Activated CD8-positive, alpha-beta T cell treated with anti-CD3 and anti-CD28 coated beads for 36 hours (primary cell): ENCODE measurements at regions of chr20 and their contacts with region 1.

Region 1: GRCh38 chr20:16810216-16810615 is 62.1 kb downstream of the OTOR start:
- DNase-seq: no peak
- ATAC-seq: no peak
- H3K4me3 Mint-ChIP-seq: no peak overlapping the region
- H3K27ac Mint-ChIP-seq: no peak overlapping the region
- H3K4me1 Mint-ChIP-seq: no peaks in the 10 kb centered on the region
- H3K27me3 Mint-ChIP-seq: peaks cover 19% of the 10 kb centered on the region
- CTCF ChIP-seq: no peak

Region 2: DNA sequence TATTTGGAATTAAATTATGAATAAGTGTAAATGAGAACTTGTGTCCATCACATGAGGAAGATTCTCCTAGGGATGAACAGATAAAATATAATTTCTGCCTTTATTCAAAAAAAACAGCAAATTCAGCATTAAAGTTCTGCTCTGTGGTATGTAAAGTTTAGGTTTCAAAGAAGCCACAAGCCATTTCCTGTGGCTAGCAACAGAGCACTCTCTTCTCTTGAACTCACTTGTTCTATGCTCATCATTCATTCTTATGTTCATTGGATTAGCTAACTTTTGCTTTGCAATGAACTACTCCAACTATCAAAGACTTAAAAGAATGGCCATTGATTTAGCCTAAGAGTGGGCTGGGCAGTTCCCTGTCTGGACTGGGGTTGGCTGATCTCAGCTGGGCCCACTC is 101.2 kb before region 1 on chr20:
- CTCF ChIA-PET with region 1: no interaction called
- POLR2A ChIA-PET with region 1: no interaction called
- intact Hi-C with region 1: no loop called
- DNase-seq: peak; percentile 46
- ATAC-seq: peak; percentile 87
- H3K4me3 Mint-ChIP-seq: no peak overlapping the region
- H3K27ac Mint-ChIP-seq: no peak overlapping the region
- H3K4me1 Mint-ChIP-seq: peaks cover 21% of the 10 kb centered on the region
- H3K27me3 Mint-ChIP-seq: peaks cover 7% of the 10 kb centered on the region
- CTCF ChIP-seq: no peak

Region 3: GRCh38 chr20:16821211-16822089 is 11.2 kb after region 1 on chr20:
- CTCF ChIA-PET with region 1: interaction called, 53 read pairs
- POLR2A ChIA-PET with region 1: interaction called, 3 read pairs
- intact Hi-C with region 1: no loop called
- DNase-seq: peak; percentile 29
- ATAC-seq: peak; percentile 55
- H3K4me3 Mint-ChIP-seq: no peak overlapping the region
- H3K27ac Mint-ChIP-seq: no peak overlapping the region
- H3K4me1 Mint-ChIP-seq: no peaks in the 10 kb centered on the region
- H3K27me3 Mint-ChIP-seq: peaks cover 25% of the 10 kb centered on the region
- CTCF ChIP-seq: peak; percentile 90